ENCODE measurements at regions of chr4 and their contacts with region 1.

Region 1: DNA sequence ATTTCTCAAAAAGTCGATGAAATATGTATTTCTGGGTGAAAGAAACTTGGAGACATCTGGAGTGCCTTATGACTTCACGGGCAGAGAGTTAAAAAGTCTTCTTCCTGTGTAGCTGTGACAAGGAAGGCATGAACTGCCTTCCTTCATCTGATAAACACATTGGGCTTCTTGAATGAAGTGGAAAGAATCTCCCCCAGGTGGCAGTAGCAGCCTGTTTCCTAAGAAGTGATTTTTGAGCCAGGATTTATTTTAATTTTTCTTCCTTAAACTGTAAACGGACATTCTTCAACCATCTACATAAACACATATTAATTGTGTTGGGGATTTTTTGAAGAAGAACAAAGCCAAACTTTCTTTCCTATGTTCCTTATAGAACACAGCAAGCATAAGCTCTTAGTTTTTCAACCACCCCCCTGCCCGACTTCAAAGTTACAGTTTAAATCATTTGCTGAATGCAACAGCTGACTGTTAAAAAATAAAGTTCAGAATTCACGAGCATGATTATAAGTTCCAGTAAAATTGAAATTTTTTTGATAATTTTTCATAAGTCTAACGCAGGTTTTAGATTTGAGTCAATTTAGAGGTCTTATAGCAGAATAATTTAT is 980 bp upstream of the GIMD1 start:
- DNase-seq: peak; percentile 85
- H3K4me3 ChIP-seq: peak overlapping the region; percentile 38; the same call in 1 of the 2 replicates
- H3K27ac ChIP-seq: no peak overlapping the region; the same call in 1 of the 2 replicates
- H3K4me1 ChIP-seq: peaks cover 41% of the 10 kb centered on the region
- H3K27me3 ChIP-seq: no peaks in the 10 kb centered on the region

Region 2: DNA sequence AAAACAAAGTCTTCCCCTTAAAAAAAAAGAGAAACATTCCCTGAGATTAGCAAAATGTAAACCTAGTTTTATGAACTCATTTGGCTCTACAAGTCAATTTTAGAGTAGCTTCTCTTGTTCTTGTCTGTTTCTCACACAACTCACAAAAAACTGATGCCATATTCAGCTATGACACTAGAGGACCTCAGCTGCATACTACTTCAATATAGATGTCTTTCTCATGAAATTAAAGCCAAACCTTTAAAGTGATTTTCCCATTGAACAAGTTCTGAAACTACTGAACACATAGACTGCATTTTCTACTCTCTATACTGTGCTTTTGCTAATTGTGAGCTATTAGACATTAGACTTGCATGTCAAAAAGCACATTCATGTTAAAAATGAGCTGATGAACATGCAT is 103.4 kb before region 1 on chr4:
- in situ Hi-C with region 1: no loop called
- DNase-seq: peak; percentile 83
- H3K4me3 ChIP-seq: no peak overlapping the region
- H3K27ac ChIP-seq: no peak overlapping the region
- H3K4me1 ChIP-seq: peaks cover 14% of the 10 kb centered on the region
- H3K27me3 ChIP-seq: no peaks in the 10 kb centered on the region

Region 3: GRCh38 chr4:106809076-106809475 is 439.5 kb after region 1 on chr4:
- in situ Hi-C with region 1: loop called (anchors 10 kb)
- DNase-seq: peak; percentile 67
- H3K4me3 ChIP-seq: no peak overlapping the region
- H3K27ac ChIP-seq: no peak overlapping the region
- H3K4me1 ChIP-seq: peaks cover 10% of the 10 kb centered on the region; the same call in 1 of the 2 replicates
- H3K27me3 ChIP-seq: no peaks in the 10 kb centered on the region

Region 4: GRCh38 chr4:106909486-106910188 is 540.1 kb after region 1 on chr4:
- in situ Hi-C with region 1: loop called (anchors 10 kb)
- DNase-seq: no peak
- H3K4me3 ChIP-seq: no peak overlapping the region
- H3K27ac ChIP-seq: no peak overlapping the region
- H3K4me1 ChIP-seq: no peaks in the 10 kb centered on the region
- H3K27me3 ChIP-seq: no peaks in the 10 kb centered on the region

Region 5: DNA sequence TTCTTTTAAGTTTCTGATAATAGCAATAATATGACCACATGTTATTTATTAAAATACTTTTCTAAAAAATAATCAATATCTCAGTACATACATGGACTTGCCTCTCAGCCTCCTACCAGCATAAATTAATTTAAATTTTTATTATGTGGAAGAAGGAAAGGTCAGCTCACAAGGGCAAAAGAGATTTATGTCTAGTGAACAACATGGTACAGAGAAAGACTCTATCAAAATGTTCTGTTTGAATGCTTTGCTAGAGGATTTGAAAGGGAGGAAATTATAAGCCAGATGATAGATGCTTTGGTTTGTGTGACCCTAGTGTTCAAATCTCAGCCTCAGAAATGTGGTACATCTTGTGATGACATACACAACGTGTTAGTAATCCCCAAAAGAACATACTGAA is 572.3 kb after region 1 on chr4:
- in situ Hi-C with region 1: no loop called
- DNase-seq: no peak
- H3K4me3 ChIP-seq: no peak overlapping the region
- H3K27ac ChIP-seq: no peak overlapping the region
- H3K4me1 ChIP-seq: no peaks in the 10 kb centered on the region
- H3K27me3 ChIP-seq: no peaks in the 10 kb centered on the region